ENCODE measurements at regions of chr1 and their contacts with region 1.

Region 1: GRCh38 chr1:93672069-93672468 is 9.6 kb downstream of the BCAR3 start:
- DNase-seq: no peak
- ATAC-seq: no peak
- H3K4me3 ChIP-seq: no peak overlapping the region
- H3K27ac ChIP-seq: no peak overlapping the region
- H3K4me1 ChIP-seq: no peaks in the 10 kb centered on the region
- H3K27me3 ChIP-seq: no peaks in the 10 kb centered on the region; a peak in 1 of 4 replicates
- CTCF ChIP-seq: no peak
- EP300 ChIP-seq: no peak
- POLR2A ChIP-seq: no peak
- RAD21 ChIP-seq: no peak

Region 2: DNA sequence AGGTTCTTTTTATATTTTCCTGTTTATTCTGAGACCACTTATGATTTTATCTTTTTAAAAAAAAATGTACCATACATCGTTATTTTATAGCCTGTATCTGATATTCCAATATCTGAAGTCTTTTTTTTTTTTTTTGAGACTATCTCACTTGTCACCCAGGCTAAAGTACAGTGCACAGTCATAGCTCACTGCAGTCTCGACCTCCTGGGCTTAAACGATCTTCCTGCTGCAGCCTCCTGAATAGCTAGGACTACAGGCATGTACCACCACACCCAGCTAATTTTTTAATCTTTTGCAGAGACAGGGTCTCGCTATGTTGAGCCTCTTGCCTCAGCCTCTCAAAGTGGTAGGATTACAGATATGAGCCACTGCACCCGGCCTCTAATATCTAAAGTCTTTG is 15.6 kb before region 1 on chr1:
- CTCF ChIA-PET with region 1: interaction called, 19 read pairs
- POLR2A ChIA-PET with region 1: interaction called, 3 read pairs
- RAD21 ChIA-PET with region 1: no interaction called
- SMC1A ChIA-PET with region 1: interaction called, 14 read pairs
- in situ Hi-C with region 1: no loop called
- intact Hi-C with region 1: no loop called
- DNase-seq: no peak
- ATAC-seq: no peak
- H3K4me3 ChIP-seq: no peak overlapping the region
- H3K27ac ChIP-seq: no peak overlapping the region
- H3K4me1 ChIP-seq: no peaks in the 10 kb centered on the region
- H3K27me3 ChIP-seq: no peaks in the 10 kb centered on the region
- CTCF ChIP-seq: no peak
- EP300 ChIP-seq: no peak
- POLR2A ChIP-seq: no peak
- RAD21 ChIP-seq: no peak

Region 3: GRCh38 chr1:93661829-93662474 is 10.1 kb before region 1 on chr1:
- CTCF ChIA-PET with region 1: interaction called, 19 read pairs
- POLR2A ChIA-PET with region 1: interaction called, 4 read pairs
- RAD21 ChIA-PET with region 1: interaction called, 6 read pairs
- SMC1A ChIA-PET with region 1: interaction called, 14 read pairs
- in situ Hi-C with region 1: no loop called
- intact Hi-C with region 1: no loop called
- DNase-seq: no peak
- ATAC-seq: peak; percentile 71
- H3K4me3 ChIP-seq: no peak overlapping the region
- H3K27ac ChIP-seq: no peak overlapping the region
- H3K4me1 ChIP-seq: no peaks in the 10 kb centered on the region
- H3K27me3 ChIP-seq: no peaks in the 10 kb centered on the region
- CTCF ChIP-seq: no peak
- EP300 ChIP-seq: no peak
- POLR2A ChIP-seq: no peak
- RAD21 ChIP-seq: no peak

Region 4: DNA sequence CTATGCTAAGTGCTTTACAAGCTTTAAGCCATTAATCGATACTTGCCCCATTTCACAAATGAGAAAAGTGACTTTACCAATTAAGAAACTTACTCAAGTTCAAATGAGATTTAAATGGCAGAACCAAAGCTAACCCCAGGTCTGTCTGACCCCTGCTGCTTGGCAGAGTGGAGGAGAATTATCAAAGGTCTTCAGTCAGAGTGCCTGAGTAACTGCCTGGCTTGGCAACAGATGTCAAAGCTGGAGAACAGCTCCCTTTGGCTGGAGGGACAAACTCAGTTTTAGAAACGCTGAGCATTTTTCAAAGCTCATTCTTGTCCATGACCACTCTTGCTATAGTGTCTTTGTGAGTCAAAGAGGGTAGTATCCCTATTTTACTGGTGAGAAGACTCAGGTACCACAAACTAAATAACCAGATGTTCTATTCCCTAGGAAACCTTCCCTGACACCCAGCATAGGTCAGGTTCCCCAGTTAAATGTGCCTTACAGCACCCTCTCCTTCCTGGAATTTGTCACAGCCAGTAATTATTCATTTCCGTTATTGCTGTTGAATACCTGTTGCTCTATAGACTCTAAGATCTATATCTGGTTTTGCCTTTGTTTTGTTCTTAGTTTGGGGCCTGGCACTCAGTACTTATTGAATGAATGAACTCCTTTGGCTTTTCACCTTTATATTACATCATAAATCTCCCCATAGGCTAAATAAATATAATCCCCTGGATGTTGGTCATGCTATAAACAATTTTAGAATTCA is 14.6 kb after region 1 on chr1:
- CTCF ChIA-PET with region 1: interaction called, 15 read pairs
- POLR2A ChIA-PET with region 1: interaction called, 3 read pairs
- RAD21 ChIA-PET with region 1: interaction called, 8 read pairs
- SMC1A ChIA-PET with region 1: interaction called, 21 read pairs
- in situ Hi-C with region 1: no loop called
- intact Hi-C with region 1: no loop called
- DNase-seq: no peak
- ATAC-seq: no peak
- H3K4me3 ChIP-seq: no peak overlapping the region
- H3K27ac ChIP-seq: no peak overlapping the region
- H3K4me1 ChIP-seq: peaks cover 16% of the 10 kb centered on the region
- H3K27me3 ChIP-seq: no peaks in the 10 kb centered on the region; a peak in 2 of 4 replicates
- CTCF ChIP-seq: no peak
- EP300 ChIP-seq: no peak
- POLR2A ChIP-seq: no peak
- RAD21 ChIP-seq: no peak

Region 5: DNA sequence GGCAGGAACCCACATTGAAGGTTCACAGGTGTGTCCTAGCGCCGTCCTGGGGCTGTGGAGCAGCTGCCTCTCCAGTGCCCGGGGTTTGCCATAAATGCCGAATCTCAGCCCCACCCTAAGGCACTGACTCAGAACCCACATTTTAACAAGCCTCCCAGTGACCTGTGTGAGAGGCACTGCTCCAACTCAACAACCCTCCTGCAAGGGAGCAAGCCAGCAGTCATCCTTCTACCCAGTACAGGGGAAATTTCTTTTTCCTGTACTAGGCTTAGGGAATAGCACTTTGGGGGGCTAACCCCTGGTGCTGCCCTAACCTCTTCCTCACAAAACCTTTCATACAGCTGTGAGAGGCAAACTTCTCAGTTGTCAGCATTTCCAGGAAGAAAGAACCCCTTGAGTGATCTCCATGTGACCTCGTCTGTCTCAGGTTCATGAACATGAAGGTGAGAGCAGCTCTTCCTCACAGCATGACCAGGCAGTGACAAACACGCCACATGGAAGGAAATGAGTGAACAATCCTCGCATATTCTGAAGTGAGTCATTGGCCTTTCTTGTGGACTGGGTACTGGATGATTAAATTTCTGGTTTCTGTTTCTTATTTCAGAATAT is 21.0 kb after region 1 on chr1:
- CTCF ChIA-PET with region 1: interaction called, 3 read pairs
- POLR2A ChIA-PET with region 1: interaction called, 3 read pairs
- RAD21 ChIA-PET with region 1: interaction called, 7 read pairs
- SMC1A ChIA-PET with region 1: interaction called, 17 read pairs
- in situ Hi-C with region 1: no loop called
- intact Hi-C with region 1: no loop called
- DNase-seq: peak; percentile 63
- ATAC-seq: peak; percentile 88
- H3K4me3 ChIP-seq: no peak overlapping the region
- H3K27ac ChIP-seq: peak overlapping the region; percentile 30
- H3K4me1 ChIP-seq: peaks cover 44% of the 10 kb centered on the region
- H3K27me3 ChIP-seq: no peaks in the 10 kb centered on the region
- CTCF ChIP-seq: no peak
- EP300 ChIP-seq: peak in 1 of 2 experiments; percentile 14; a peak in 1 of 4 replicates
- POLR2A ChIP-seq: no peak
- RAD21 ChIP-seq: no peak